ENCODE measurements at regions of chr15 and their contacts with region 1.

Region 1: GRCh38 chr15:69729161-69729748 is 276.6 kb downstream of the RPLP1 start:
- DNase-seq: peak in 2 of 5 donors; percentile 17 to 36
- ATAC-seq: no peak
- H3K4me3 ChIP-seq: no peak overlapping the region
- H3K27ac ChIP-seq: no peak overlapping the region
- H3K4me1 ChIP-seq: peaks cover 0 to 34% (median 0%) of the 10 kb centered on the region in 12 donors
- H3K27me3 ChIP-seq: peaks cover 0 to 19% (median 3%) of the 10 kb centered on the region in 9 donors
- CTCF ChIP-seq: peak; percentile 53 to 81 (median 72)
- POLR2A ChIP-seq: no peak

Region 2: GRCh38 chr15:70062321-70062956 is 333.2 kb after region 1 on chr15:
- intact Hi-C with region 1: no loop called
- DNase-seq: peak; percentile 69 to 79 (median 77)
- ATAC-seq: peak; percentile 89 to 94 (median 91)
- H3K4me3 ChIP-seq: peak overlapping the region in 7 of 12 donors; percentile 11 to 46 (median 32)
- H3K27ac ChIP-seq: peak overlapping the region in 3 of 12 donors; percentile 8 to 52 (median 47)
- H3K4me1 ChIP-seq: peaks cover 0 to 31% (median 12%) of the 10 kb centered on the region in 12 donors
- H3K27me3 ChIP-seq: no peaks in the 10 kb centered on the region
- CTCF ChIP-seq: no peak
- POLR2A ChIP-seq: no peak

Region 3: DNA sequence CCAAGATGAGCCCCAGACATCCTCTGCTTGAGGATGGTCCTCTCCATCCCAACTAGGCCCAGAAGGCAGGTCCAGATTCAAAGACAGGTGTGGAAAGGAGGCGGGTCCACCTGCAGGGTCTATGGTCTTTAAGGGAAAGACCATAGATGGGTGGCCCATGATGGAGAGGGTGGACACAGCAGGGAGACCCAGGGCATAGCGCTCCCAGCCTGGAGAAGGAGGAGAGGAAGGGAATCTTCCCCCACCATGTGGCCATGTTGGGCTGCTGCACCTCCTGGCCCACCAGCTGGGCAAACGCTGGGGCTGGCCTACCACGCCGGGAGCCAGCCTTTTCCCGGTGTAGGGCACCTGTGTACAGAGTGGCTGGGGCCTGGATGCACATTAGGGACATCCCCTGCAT is 633.6 kb after region 1 on chr15:
- intact Hi-C with region 1: loop called in 6 of 10 experiments (anchors 2 to 10 kb)
- DNase-seq: peak in 4 of 5 donors; percentile 35 to 70 (median 40)
- ATAC-seq: peak in 3 of 4 donors; percentile 82 to 89 (median 87)
- H3K4me3 ChIP-seq: no peak overlapping the region
- H3K27ac ChIP-seq: no peak overlapping the region
- H3K4me1 ChIP-seq: no peaks in the 10 kb centered on the region
- H3K27me3 ChIP-seq: peaks cover 0 to 16% (median 0%) of the 10 kb centered on the region in 9 donors
- CTCF ChIP-seq: peak; percentile 68 to 82 (median 71)
- POLR2A ChIP-seq: no peak

Region 4: DNA sequence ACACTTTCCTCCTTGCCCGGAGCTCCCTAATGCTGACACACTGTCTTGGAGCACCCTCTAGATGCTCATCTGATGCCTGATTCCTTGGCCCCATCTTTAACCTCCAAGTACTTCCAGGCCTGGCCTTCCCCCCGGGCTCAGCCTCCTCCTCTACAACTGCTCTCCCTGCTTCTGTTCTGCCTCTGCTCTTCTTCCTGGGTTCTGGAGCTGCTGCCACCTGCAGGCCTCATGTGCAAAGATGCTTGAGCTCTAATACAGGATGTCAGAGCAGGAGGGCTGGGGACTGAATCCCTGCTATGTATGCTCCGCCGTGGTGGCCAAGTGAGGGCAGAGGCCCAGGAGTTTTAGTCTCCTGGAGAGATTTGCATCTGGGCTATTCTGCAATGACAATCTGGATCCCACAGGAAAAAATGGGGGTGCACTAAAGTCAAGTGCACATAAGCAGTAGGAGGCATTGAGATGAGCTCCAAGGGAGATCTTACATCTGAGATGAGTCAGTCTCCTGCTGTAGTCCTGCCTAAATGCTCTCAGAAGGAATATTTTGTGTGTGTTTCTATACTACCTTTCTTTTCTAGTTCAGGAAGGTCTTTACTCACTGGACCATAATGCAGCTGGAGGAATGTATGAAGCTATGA is 737.8 kb after region 1 on chr15:
- intact Hi-C with region 1: loop called in 5 of 10 experiments (anchors 5 to 10 kb)
- DNase-seq: peak in 4 of 5 donors; percentile 33 to 68 (median 41)
- ATAC-seq: peak; percentile 62 to 84 (median 74)
- H3K4me3 ChIP-seq: no peak overlapping the region
- H3K27ac ChIP-seq: no peak overlapping the region
- H3K4me1 ChIP-seq: peaks cover 0 to 15% (median 0%) of the 10 kb centered on the region in 12 donors
- H3K27me3 ChIP-seq: peaks cover 0 to 23% (median 2%) of the 10 kb centered on the region in 9 donors
- CTCF ChIP-seq: peak; percentile 39 to 71 (median 50)
- POLR2A ChIP-seq: no peak

Region 5: GRCh38 chr15:70488002-70488605 is 758.8 kb after region 1 on chr15:
- intact Hi-C with region 1: loop called in 5 of 10 experiments (anchors 2 to 10 kb)
- DNase-seq: peak; percentile 58 to 82 (median 62)
- ATAC-seq: peak; percentile 29 to 75 (median 60)
- H3K4me3 ChIP-seq: no peak overlapping the region
- H3K27ac ChIP-seq: peak overlapping the region in 1 of 12 donors; percentile 76
- H3K4me1 ChIP-seq: peaks cover 0 to 74% (median 0%) of the 10 kb centered on the region in 12 donors
- H3K27me3 ChIP-seq: peaks cover 0 to 6% (median 0%) of the 10 kb centered on the region in 9 donors
- CTCF ChIP-seq: peak; percentile 91 to 97 (median 95)
- POLR2A ChIP-seq: no peak

Measured in heart left ventricle (tissue), 16 donors.